ENCODE measurements at regions of chr15 and their contacts with region 1.

Region 1: GRCh38 chr15:38817427-38818156 is 253.0 kb upstream of the RASGRP1 start:
- DNase-seq: peak; percentile 86
- H3K4me3 ChIP-seq: no peak overlapping the region
- H3K27ac ChIP-seq: peak overlapping the region; percentile 36
- H3K4me1 ChIP-seq: peaks cover 17% of the 10 kb centered on the region
- H3K27me3 ChIP-seq: no peaks in the 10 kb centered on the region
- CTCF ChIP-seq: peak; percentile 98 to 99
- POLR2A ChIP-seq: no peak

Region 2: GRCh38 chr15:38707802-38708671 is 109.6 kb before region 1 on chr15:
- CTCF ChIA-PET with region 1: interaction called, 4 read pairs
- POLR2A ChIA-PET with region 1: no interaction called
- dilution Hi-C with region 1: no loop called
- intact Hi-C with region 1: loop called (anchors 2 kb)
- DNase-seq: peak; percentile 87
- H3K4me3 ChIP-seq: no peak overlapping the region
- H3K27ac ChIP-seq: no peak overlapping the region
- H3K4me1 ChIP-seq: peaks cover 10% of the 10 kb centered on the region
- H3K27me3 ChIP-seq: no peaks in the 10 kb centered on the region
- CTCF ChIP-seq: peak; percentile 71 to 78
- POLR2A ChIP-seq: no peak

Region 3: DNA sequence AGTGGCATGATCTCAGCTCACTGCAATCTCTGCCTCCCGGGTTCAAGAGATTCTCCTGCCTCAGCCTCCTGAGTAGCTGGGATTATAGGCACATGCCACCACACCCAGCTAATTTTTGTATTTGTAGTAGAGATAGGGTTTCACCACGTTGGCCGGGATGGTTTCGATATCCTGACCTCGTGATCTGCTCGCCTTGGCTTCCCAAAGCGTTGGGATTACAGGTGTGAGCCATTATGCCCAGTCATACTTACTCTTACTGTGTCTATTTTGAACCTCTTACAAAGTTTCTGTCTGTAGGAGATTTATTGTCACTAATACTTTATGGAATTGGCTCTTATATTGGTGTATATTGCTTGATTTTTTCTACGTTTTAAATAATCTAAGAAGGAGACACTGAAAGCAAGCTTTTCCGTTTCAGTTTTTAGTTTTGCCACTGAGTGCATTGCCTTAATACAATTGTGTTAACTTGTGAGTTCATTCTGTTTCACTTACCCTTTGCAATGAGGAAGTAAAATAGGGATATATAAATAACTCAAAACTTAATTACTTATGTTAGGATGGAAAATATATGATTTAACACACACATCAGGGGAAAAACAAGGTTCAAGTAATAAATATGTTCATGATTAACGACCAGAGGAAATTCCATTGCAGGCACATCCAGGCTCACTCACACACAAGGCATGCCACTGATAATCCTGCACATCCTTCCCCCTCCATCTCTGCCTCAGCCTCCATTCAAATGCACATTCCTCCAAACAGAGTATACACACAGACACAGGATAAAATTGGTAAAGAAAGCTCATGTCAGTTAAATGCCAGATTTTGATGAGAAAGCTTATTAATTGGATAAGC is 26.4 kb after region 1 on chr15:
- CTCF ChIA-PET with region 1: interaction called, 3 read pairs
- POLR2A ChIA-PET with region 1: no interaction called
- dilution Hi-C with region 1: no loop called
- intact Hi-C with region 1: loop called (anchors 1 kb)
- DNase-seq: peak; percentile 95
- H3K4me3 ChIP-seq: peak overlapping the region in 1 of 3 experiments; percentile 15
- H3K27ac ChIP-seq: peak overlapping the region; percentile 98
- H3K4me1 ChIP-seq: peaks cover 41% of the 10 kb centered on the region
- H3K27me3 ChIP-seq: no peaks in the 10 kb centered on the region
- CTCF ChIP-seq: no peak
- POLR2A ChIP-seq: peak; percentile 61

Region 4: DNA sequence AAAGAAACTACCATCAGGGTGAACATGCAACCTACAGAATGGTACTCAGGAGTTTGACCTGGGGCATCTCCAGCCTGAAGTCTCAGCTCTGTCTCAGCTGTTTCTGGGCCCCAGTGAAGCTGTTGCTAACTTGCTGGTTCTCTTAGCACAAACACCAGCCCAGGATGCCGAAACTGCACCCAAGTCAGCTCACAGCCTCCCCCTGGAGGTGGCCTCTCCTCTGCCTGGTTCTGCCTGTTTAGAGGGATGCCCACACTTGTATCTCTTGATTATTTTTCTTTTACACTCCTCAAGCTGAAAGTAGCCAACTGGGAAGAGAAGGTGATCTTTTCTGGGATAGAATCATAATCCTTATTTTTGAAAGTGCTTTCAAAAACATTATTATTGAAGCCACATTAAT is 36.0 kb after region 1 on chr15:
- CTCF ChIA-PET with region 1: interaction called, 3 read pairs
- POLR2A ChIA-PET with region 1: no interaction called
- dilution Hi-C with region 1: no loop called
- intact Hi-C with region 1: loop called (anchors 1 kb)
- DNase-seq: no peak
- H3K4me3 ChIP-seq: no peak overlapping the region
- H3K27ac ChIP-seq: no peak overlapping the region
- H3K4me1 ChIP-seq: no peaks in the 10 kb centered on the region
- H3K27me3 ChIP-seq: no peaks in the 10 kb centered on the region
- CTCF ChIP-seq: peak in 1 of 2 donors; percentile 43
- POLR2A ChIP-seq: no peak

Measured in endothelial cell of umbilical vein (primary cell).